PC-3 (cell line): ENCODE measurements at regions of chr10 and their contacts with region 1.

Region 1: GRCh38 chr10:4131407-4132228 is 346.6 kb upstream of the KLF6 start:
- DNase-seq: peak; percentile 66
- ATAC-seq: peak; percentile 91
- H3K4me3 ChIP-seq: peak overlapping the region; percentile 44
- H3K27ac ChIP-seq: peak overlapping the region; percentile 60
- H3K4me1 ChIP-seq: peaks cover 31% of the 10 kb centered on the region
- H3K27me3 ChIP-seq: no peaks in the 10 kb centered on the region
- CTCF ChIP-seq: no peak

Region 2: GRCh38 chr10:4018054-4018511 is 113.5 kb before region 1 on chr10:
- CTCF ChIA-PET with region 1: no interaction called
- POLR2A ChIA-PET with region 1: no interaction called
- intact Hi-C with region 1: no loop called
- DNase-seq: no peak
- ATAC-seq: no peak
- H3K4me3 ChIP-seq: no peak overlapping the region
- H3K27ac ChIP-seq: no peak overlapping the region
- H3K4me1 ChIP-seq: no peaks in the 10 kb centered on the region
- H3K27me3 ChIP-seq: no peaks in the 10 kb centered on the region
- CTCF ChIP-seq: no peak

Region 3: DNA sequence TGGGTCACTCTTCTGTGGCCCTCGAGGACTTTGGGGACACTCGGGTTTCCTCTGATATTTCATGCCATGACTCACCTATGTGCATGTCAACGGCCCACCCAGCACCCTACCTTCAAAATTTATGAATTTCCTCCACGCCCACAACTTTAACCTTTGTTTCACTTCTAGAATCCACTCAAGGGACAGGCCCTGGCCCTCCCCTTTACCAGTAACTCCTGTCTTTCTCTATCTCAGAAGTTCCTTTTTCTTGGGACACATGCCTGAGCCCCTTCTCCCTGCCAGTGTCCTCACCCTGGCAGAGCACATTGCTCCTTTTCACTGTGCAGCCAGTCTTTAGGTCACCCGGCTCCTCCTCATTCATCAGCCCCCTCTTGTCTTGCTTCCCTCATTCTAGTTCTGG is 64.1 kb before region 1 on chr10:
- CTCF ChIA-PET with region 1: no interaction called
- POLR2A ChIA-PET with region 1: no interaction called
- intact Hi-C with region 1: loop called (anchors 5 kb)
- DNase-seq: peak; percentile 5
- ATAC-seq: no peak; the same call in 1 of the 2 replicates
- H3K4me3 ChIP-seq: no peak overlapping the region
- H3K27ac ChIP-seq: peak overlapping the region; percentile 99
- H3K4me1 ChIP-seq: peaks cover 24% of the 10 kb centered on the region
- H3K27me3 ChIP-seq: no peaks in the 10 kb centered on the region
- CTCF ChIP-seq: no peak

Region 4: GRCh38 chr10:4174197-4174596 is 42.6 kb after region 1 on chr10:
- CTCF ChIA-PET with region 1: no interaction called
- POLR2A ChIA-PET with region 1: no interaction called
- intact Hi-C with region 1: no loop called
- DNase-seq: peak; percentile 23
- ATAC-seq: peak; percentile 42; the same call in 1 of the 2 replicates
- H3K4me3 ChIP-seq: no peak overlapping the region
- H3K27ac ChIP-seq: no peak overlapping the region
- H3K4me1 ChIP-seq: no peaks in the 10 kb centered on the region
- H3K27me3 ChIP-seq: no peaks in the 10 kb centered on the region
- CTCF ChIP-seq: peak; percentile 40; the same call in 1 of the 2 replicates